Activated naive CD4-positive, alpha-beta T cell treated with anti-CD3 and anti-CD28 coated beads for 36 hours (primary cell): ENCODE measurements at regions of chr2 and their contacts with region 1.

Region 1: GRCh38 chr2:238462782-238463396 is 36.2 kb downstream of the ASB1 start:
- DNase-seq: no peak
- H3K4me3 Mint-ChIP-seq: no peak overlapping the region
- H3K27ac Mint-ChIP-seq: no peak overlapping the region
- H3K4me1 Mint-ChIP-seq: peaks cover 6% of the 10 kb centered on the region
- H3K27me3 Mint-ChIP-seq: no peaks in the 10 kb centered on the region

Region 2: DNA sequence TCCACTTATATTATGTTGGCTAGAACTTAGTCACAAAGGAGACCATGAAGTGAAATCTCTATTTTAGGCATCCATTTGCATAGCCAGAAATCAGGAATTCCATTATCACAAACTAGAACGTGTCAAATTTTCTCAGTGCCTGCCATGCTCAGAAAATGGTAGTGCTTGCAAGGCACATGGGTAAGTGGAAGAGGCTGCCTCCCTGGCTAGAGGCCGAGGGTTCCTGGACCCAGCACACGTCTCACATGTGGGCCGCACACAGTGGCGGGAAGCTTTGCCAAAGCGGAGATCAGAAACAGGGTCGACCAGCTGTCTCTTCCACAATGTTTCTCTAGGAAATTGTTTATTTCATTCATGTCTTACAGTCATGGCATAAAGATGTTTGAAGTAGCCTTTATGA is 100.3 kb before region 1 on chr2:
- CTCF ChIA-PET with region 1: interaction called, 7 read pairs
- intact Hi-C with region 1: loop called (anchors 1 kb)
- DNase-seq: no peak
- H3K4me3 Mint-ChIP-seq: no peak overlapping the region
- H3K27ac Mint-ChIP-seq: no peak overlapping the region
- H3K4me1 Mint-ChIP-seq: no peaks in the 10 kb centered on the region
- H3K27me3 Mint-ChIP-seq: no peaks in the 10 kb centered on the region

Region 3: GRCh38 chr2:238370823-238371372 is 92.0 kb before region 1 on chr2:
- CTCF ChIA-PET with region 1: interaction called, 27 read pairs
- intact Hi-C with region 1: loop called (anchors 1 kb)
- DNase-seq: peak; percentile 76
- H3K4me3 Mint-ChIP-seq: no peak overlapping the region
- H3K27ac Mint-ChIP-seq: no peak overlapping the region
- H3K4me1 Mint-ChIP-seq: peaks cover 5% of the 10 kb centered on the region
- H3K27me3 Mint-ChIP-seq: no peaks in the 10 kb centered on the region

Region 4: DNA sequence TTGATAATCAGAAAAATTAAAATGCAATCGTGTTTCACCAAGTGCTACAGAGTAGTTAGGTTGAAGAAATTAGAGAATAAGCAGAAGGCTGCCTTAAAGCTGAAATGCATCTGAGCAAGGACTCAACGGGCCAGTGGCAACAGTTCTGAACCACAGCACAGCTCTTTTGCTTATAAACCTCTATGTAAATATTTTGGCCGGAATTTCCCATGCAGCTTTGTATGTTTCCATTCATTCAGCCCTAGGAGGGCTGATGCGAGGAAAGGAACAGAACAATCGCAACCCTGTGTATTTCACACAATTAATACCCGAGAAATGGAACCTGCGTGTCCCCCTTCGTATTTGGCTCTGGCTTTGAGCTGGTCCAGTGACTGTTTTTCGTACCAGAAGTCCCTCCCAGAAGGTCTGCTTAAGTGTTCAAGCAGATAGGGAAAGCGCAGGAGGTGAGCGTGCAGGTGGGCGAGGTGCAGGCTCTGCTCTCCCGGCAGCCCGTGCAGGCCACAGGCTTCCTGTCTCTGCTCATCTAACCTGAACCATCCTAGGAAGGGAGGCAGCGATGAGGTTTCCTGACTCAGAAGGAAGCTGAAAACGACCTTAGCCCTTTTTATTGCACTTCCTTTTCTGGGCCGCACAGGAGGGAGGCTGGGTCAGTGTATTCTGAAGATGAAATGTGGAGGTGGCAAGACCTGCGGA is 31.1 kb after region 1 on chr2:
- CTCF ChIA-PET with region 1: no interaction called
- intact Hi-C with region 1: no loop called
- DNase-seq: peak; percentile 72
- H3K4me3 Mint-ChIP-seq: no peak overlapping the region
- H3K27ac Mint-ChIP-seq: peak overlapping the region; percentile 69
- H3K4me1 Mint-ChIP-seq: peaks cover 22% of the 10 kb centered on the region
- H3K27me3 Mint-ChIP-seq: no peaks in the 10 kb centered on the region